ENCODE measurements at regions of chr20 and their contacts with region 1.

Region 1: GRCh38 chr20:20360464-20360863 is 7.4 kb upstream of the INSM1 start:
- DNase-seq: no peak
- ATAC-seq: peak; percentile 76

Region 2: DNA sequence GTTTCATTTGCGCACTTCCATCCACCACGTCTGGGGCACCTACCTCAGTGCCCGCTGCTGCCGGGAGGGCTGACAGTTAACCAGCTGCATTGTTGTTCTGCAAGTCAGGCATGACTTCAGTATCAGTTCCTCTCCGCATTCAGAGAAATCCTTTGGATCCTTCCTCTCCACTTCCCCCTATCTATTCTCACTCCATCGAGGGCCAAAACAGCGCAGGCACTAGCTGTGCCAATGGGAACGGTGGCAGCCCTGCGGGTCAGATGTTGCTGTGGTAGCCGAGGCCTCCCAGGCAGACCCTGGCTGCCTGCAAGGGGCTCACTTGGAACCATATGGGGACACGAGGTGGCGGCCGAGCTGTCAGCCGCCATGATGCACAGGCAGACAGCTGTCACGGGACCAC is 56.7 kb before region 1 on chr20:
- intact Hi-C with region 1: no loop called
- DNase-seq: peak; percentile 85
- ATAC-seq: peak; percentile 91

Region 3: GRCh38 chr20:20466341-20466879 is 105.9 kb after region 1 on chr20:
- intact Hi-C with region 1: loop called (anchors 10 kb)
- DNase-seq: no peak
- ATAC-seq: peak; percentile 80

Region 4: DNA sequence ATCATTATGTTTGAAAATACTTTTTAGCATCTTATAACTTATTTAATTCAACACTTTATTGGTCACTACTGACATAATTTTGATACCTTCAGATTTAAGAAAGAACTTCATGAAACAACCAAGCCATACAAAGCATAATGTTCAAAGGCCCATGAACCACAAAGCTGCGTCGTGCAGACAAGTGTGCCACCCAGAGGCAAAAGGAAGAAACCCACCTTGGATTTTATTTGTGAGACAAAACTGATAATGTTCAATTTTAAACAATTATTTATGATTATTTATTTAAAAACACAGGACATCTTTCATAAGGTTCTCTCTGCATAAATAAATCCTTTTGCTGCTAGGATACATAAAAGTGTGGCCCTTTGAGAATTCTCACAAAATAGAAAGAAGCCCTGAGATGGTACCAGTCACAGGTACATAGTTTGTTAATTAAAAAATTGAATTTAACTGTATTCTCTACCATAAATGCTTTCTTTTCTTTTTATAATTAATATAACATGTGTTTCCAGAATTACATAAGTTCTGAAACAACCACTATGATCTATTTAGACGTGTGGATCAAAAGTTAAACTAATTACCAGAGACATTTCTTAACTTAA is 208.2 kb after region 1 on chr20:
- intact Hi-C with region 1: loop called (anchors 2 kb)
- DNase-seq: no peak
- ATAC-seq: no peak

Measured in Right ventricle myocardium inferior (tissue), 1 donor.